Cardiac septum (tissue), 1 donor: ENCODE measurements at regions of chr9 and their contacts with region 1.

Region 1: GRCh38 chr9:119365291-119366027 is 3.8 kb downstream of the BRINP1 start:
- DNase-seq: no peak

Region 2: GRCh38 chr9:117782931-117783788 is 1582.3 kb before region 1 on chr9:
- intact Hi-C with region 1: loop called (anchors 10 kb)
- DNase-seq: no peak

Region 3: DNA sequence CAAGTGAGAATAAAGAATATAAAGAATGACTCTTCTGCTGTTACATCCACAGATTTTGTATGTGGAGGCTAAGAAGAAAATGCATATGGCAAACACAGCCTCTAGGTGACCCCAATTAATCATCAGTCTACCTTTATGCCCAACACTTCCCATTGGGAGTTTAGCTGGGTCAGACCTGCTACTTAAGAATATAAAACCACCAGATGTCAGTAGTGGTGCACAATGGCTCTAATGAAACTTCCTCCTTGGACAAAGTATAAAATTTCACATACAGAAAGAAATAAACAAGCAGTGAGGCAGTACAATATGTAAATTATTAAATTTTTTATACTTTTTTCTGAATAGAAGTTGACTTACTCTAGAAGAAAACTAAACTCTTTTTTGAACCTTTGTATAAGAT is 536.1 kb before region 1 on chr9:
- intact Hi-C with region 1: loop called (anchors 2 kb)
- DNase-seq: no peak